ENCODE measurements at regions of chr11 and their contacts with region 1.

Region 1: DNA sequence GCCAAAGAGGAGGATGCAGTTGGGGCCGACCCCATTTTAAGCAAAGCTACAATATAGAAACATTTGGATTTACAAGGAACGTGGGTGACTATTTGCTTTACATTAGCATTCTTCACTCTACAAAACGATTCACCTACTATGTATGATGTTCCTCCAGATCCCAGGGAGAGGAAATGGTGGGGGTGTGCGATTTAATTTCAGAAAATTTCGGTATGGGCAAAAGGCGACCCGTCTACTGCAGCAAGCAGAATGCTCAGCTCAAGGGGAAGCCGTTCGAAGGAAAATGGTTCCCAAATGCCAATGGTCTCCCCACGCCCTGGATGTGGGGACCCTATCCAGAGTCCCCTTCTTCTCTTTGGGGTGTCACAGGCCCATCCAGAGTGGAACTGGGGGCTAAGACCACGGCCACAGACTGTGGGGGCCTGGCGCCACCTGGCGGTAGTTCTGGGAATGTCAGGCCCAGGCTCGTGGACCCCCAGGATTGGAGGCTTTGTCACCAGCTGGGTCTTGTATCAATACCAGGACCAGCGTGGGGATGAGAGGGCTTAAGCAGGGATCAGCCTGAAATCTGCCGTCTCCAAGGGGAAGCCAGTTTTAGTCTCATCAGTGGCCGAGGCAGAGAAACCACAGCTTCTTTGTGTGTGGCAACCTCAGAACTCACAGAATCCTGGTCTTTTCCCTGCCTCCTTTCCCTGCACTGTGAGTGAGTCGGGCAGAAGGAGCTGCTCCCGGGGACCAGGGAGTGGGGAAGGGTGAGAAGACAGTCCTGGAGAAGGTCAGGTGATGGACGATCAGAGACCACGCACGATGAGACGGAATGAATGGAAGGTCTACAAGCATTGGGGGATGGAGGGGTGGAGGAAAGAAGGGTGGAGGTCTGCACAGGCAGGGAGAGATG is 8.4 kb downstream of the LRRC10B start:
- DNase-seq: peak; percentile 85
- ATAC-seq: peak; percentile 43
- H3K4me3 Mint-ChIP-seq: peak overlapping the region; percentile 45
- H3K27ac Mint-ChIP-seq: peak overlapping the region; percentile 57; the same call in 1 of the 2 replicates
- H3K4me1 Mint-ChIP-seq: peaks cover 48% of the 10 kb centered on the region
- H3K27me3 Mint-ChIP-seq: peaks cover 9% of the 10 kb centered on the region; the same call in 1 of the 2 replicates
- CTCF ChIP-seq: peak; percentile 100

Region 2: GRCh38 chr11:61021661-61022212 is 495.2 kb before region 1 on chr11:
- CTCF ChIA-PET with region 1: no interaction called
- POLR2A ChIA-PET with region 1: no interaction called
- DNase-seq: peak; percentile 83
- ATAC-seq: peak; percentile 96
- H3K4me3 Mint-ChIP-seq: peak overlapping the region; percentile 66
- H3K27ac Mint-ChIP-seq: no peak overlapping the region
- H3K4me1 Mint-ChIP-seq: peaks cover 26% of the 10 kb centered on the region
- H3K27me3 Mint-ChIP-seq: peaks cover 26% of the 10 kb centered on the region
- CTCF ChIP-seq: no peak

Region 3: GRCh38 chr11:61173456-61173855 is 343.5 kb before region 1 on chr11:
- CTCF ChIA-PET with region 1: no interaction called
- POLR2A ChIA-PET with region 1: no interaction called
- DNase-seq: no peak
- ATAC-seq: no peak
- H3K4me3 Mint-ChIP-seq: no peak overlapping the region
- H3K27ac Mint-ChIP-seq: no peak overlapping the region
- H3K4me1 Mint-ChIP-seq: no peaks in the 10 kb centered on the region
- H3K27me3 Mint-ChIP-seq: peaks cover 9% of the 10 kb centered on the region
- CTCF ChIP-seq: no peak

Region 4: GRCh38 chr11:61266602-61267001 is 250.3 kb before region 1 on chr11:
- CTCF ChIA-PET with region 1: no interaction called
- POLR2A ChIA-PET with region 1: no interaction called
- DNase-seq: no peak
- ATAC-seq: no peak
- H3K4me3 Mint-ChIP-seq: no peak overlapping the region
- H3K27ac Mint-ChIP-seq: no peak overlapping the region
- H3K4me1 Mint-ChIP-seq: no peaks in the 10 kb centered on the region
- H3K27me3 Mint-ChIP-seq: no peaks in the 10 kb centered on the region
- CTCF ChIP-seq: no peak

Region 5: DNA sequence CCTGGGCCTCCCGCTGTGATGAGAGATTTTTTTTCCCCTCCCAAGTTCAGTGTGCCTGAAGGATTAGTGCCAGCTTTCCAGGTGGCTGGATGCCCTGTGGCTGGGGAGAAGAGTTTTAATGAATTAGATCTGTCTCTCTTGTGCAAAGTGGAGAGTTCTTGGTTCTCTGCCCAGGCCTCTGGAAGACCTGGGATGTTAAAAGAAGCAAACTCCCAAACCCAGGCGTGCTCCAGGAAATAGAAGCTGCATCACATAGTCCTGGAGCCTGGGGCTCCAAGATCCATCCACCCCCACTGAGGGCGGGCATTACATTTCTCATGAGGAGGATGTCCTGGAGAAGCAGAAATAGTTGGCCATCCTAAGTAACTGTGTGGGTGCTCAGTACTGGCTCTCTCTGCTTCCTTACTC is 56.4 kb before region 1 on chr11:
- CTCF ChIA-PET with region 1: interaction called, 20 read pairs
- POLR2A ChIA-PET with region 1: no interaction called
- DNase-seq: no peak
- ATAC-seq: no peak
- H3K4me3 Mint-ChIP-seq: no peak overlapping the region
- H3K27ac Mint-ChIP-seq: 0 out of 2 replicates have a peak overlapping the region, but pooled peaks have one; percentile 21
- H3K4me1 Mint-ChIP-seq: peaks cover 2% of the 10 kb centered on the region; the same call in 1 of the 2 replicates
- H3K27me3 Mint-ChIP-seq: no peaks in the 10 kb centered on the region
- CTCF ChIP-seq: no peak

Region 6: GRCh38 chr11:61503212-61503770 is 13.6 kb before region 1 on chr11:
- CTCF ChIA-PET with region 1: interaction called, 61 read pairs
- POLR2A ChIA-PET with region 1: no interaction called
- DNase-seq: no peak
- ATAC-seq: no peak
- H3K4me3 Mint-ChIP-seq: no peak overlapping the region
- H3K27ac Mint-ChIP-seq: no peak overlapping the region
- H3K4me1 Mint-ChIP-seq: peaks cover 73% of the 10 kb centered on the region
- H3K27me3 Mint-ChIP-seq: peaks cover 31% of the 10 kb centered on the region
- CTCF ChIP-seq: no peak

Region 7: DNA sequence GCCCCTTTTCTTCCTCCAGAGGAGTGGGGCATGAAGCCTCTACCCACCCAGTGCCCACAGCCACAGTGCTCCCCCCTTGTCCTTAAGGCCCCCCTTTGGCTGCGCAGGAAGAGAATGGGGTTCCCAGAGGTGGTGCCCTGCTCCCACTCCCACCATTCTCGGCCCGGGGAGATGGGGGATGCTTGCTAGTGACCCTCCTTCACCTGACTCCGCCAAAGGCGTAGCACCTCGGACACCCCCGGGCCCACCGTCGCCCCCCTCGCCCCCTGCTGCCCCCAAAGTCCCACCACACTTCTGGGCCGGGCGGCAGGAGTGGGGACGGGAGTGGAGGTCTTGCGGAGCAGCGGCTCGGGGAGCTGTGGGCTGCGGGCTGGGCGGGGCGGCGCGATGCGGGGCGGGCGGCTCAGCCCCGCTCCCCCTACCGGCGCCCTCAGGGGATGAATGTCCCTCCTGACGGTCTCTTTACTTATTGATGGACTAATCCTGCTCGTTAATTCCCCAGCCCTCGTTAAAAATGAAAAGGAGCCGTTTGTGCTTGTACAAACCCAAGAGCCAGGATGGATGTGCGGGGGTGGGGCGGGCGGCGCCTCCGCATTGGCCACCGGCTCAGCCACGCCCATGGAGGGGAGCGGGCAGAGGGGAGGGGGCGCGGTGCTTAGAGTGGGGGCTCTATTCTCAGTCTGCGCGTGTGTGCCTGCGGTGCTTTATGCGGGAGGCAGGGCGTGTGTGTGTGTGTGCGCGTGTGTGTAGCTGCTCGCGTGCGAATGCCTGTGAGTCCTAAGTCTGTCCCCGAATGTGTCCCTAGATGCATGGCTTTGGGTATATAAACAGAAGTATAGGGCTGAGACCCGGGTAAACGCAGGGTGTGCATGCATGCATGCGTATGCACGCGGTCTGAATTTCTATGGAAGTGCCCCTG is 38.4 kb after region 1 on chr11:
- CTCF ChIA-PET with region 1: interaction called, 47 read pairs
- POLR2A ChIA-PET with region 1: no interaction called
- DNase-seq: peak; percentile 66
- ATAC-seq: peak; percentile 64
- H3K4me3 Mint-ChIP-seq: peak overlapping the region; percentile 70
- H3K27ac Mint-ChIP-seq: no peak overlapping the region
- H3K4me1 Mint-ChIP-seq: peaks cover 39% of the 10 kb centered on the region
- H3K27me3 Mint-ChIP-seq: peaks cover 30% of the 10 kb centered on the region
- CTCF ChIP-seq: peak; percentile 49; the same call in 1 of the 2 replicates

Region 8: GRCh38 chr11:61581030-61581928 is 64.4 kb after region 1 on chr11 and contains the start of gene SYT7:
- CTCF ChIA-PET with region 1: interaction called, 14 read pairs
- POLR2A ChIA-PET with region 1: no interaction called
- DNase-seq: peak; percentile 99
- ATAC-seq: peak; percentile 83
- H3K4me3 Mint-ChIP-seq: peak within 1 kb of the TSS; percentile 79
- H3K27ac Mint-ChIP-seq: no peak within 1 kb of the TSS
- H3K4me1 Mint-ChIP-seq: peaks cover 56% of the 10 kb centered on the region
- H3K27me3 Mint-ChIP-seq: peaks cover 61% of the 10 kb centered on the region
- CTCF ChIP-seq: no peak; the same call in 1 of the 2 replicates
- total RNA-seq, gene SYT7: 12.5 to 18.9 TPM (median 18.2 TPM) in 3 replicates

Region 9: GRCh38 chr11:61627567-61628445 is 110.9 kb after region 1 on chr11:
- CTCF ChIA-PET with region 1: interaction called, 40 read pairs
- POLR2A ChIA-PET with region 1: interaction called, 3 read pairs
- DNase-seq: peak; percentile 87
- ATAC-seq: peak; percentile 79
- H3K4me3 Mint-ChIP-seq: no peak overlapping the region
- H3K27ac Mint-ChIP-seq: peak overlapping the region; percentile 70
- H3K4me1 Mint-ChIP-seq: peaks cover 50% of the 10 kb centered on the region
- H3K27me3 Mint-ChIP-seq: no peaks in the 10 kb centered on the region
- CTCF ChIP-seq: peak; percentile 92